Activated T-helper 1 cell treated with anti-CD3 and anti-CD28 coated beads, Interleukin-12 subunit alpha, Interleukin-12 subunit beta, Interleukin-2, Interleukin-4 antibody, amounts not matched to agents 30 ng/mL and 10 ng/mL and 1 ng/mL, durations not matched to agents 14 hours and 24 hours and 36 hours (primary cell): ENCODE measurements at regions of chr1 and their contacts with region 1.

Region 1: GRCh38 chr1:200409761-200410565 is at the start of gene ZNF281:
- DNase-seq: peak; percentile 93
- H3K4me3 Mint-ChIP-seq: peak within 1 kb of the TSS; percentile 98
- H3K27ac Mint-ChIP-seq: peak within 1 kb of the TSS; percentile 96
- H3K4me1 Mint-ChIP-seq: peaks cover 64% of the 10 kb centered on the region
- H3K27me3 Mint-ChIP-seq: peaks cover 2% of the 10 kb centered on the region
- total RNA-seq, gene ZNF281: 23.5 and 24.1 TPM in 2 replicates

Region 2: GRCh38 chr1:200302192-200302920 is 107.6 kb before region 1 on chr1:
- intact Hi-C with region 1: loop called (anchors 1 kb)
- DNase-seq: peak; percentile 53
- H3K4me3 Mint-ChIP-seq: peak overlapping the region; percentile 83
- H3K27ac Mint-ChIP-seq: no peak overlapping the region
- H3K4me1 Mint-ChIP-seq: peaks cover 23% of the 10 kb centered on the region
- H3K27me3 Mint-ChIP-seq: peaks cover 17% of the 10 kb centered on the region

Region 3: GRCh38 chr1:200380589-200381021 is 29.4 kb before region 1 on chr1:
- intact Hi-C with region 1: loop called (anchors 2 kb)
- DNase-seq: no peak
- H3K4me3 Mint-ChIP-seq: no peak overlapping the region
- H3K27ac Mint-ChIP-seq: no peak overlapping the region
- H3K4me1 Mint-ChIP-seq: peaks cover 25% of the 10 kb centered on the region
- H3K27me3 Mint-ChIP-seq: no peaks in the 10 kb centered on the region

Region 4: DNA sequence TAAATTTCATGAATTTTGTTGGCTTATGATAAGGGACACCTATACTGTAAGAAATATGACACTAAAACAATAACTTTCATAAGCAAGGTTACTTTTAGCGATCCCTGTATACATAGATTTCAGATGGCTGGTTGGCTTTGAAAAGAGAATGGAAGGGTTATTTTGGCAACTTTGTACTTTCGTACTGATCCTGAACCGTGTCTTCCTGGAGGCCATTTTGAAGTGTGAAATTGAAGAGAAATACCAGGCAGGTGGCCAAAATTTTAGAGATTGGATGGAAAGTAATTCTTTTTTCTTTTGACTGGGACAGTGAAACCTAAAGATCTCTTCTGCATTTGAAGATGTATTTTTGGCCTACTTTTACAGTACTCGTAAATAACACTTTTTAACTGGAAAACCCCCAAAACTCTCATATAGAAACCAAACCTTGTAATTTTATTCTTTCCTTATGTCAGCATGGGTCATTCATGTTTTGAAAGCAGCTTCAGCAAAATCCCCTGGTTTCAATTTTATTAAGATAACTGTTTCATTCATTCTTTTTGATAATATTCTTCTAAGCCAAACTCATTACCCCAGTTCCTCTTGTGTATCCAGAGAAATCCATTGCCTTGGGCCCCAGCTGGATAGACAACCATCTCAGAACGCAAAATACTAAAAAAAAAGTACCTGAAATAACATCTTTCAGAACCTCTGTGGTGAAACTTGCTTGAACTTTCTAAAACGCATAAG is 38.2 kb after region 1 on chr1:
- intact Hi-C with region 1: loop called (anchors 1 kb)
- DNase-seq: no peak
- H3K4me3 Mint-ChIP-seq: peak overlapping the region; percentile 53
- H3K27ac Mint-ChIP-seq: peak overlapping the region; percentile 97
- H3K4me1 Mint-ChIP-seq: peaks cover 59% of the 10 kb centered on the region
- H3K27me3 Mint-ChIP-seq: no peaks in the 10 kb centered on the region

Region 5: GRCh38 chr1:202348509-202349205 is 1938.7 kb after region 1 on chr1 and contains the start of gene PPP1R12B:
- intact Hi-C with region 1: no loop called
- DNase-seq: peak; percentile 96
- H3K4me3 Mint-ChIP-seq: peak within 1 kb of the TSS; percentile 90
- H3K27ac Mint-ChIP-seq: peak within 1 kb of the TSS; percentile 90
- H3K4me1 Mint-ChIP-seq: peaks cover 34% of the 10 kb centered on the region
- H3K27me3 Mint-ChIP-seq: no peaks in the 10 kb centered on the region
- total RNA-seq, gene PPP1R12B: 11.1 and 15.8 TPM in 2 replicates